ENCODE measurements at regions of chr22 and their contacts with region 1.

Region 1: GRCh38 chr22:20981787-20982562 is at the start of gene LZTR1:
- DNase-seq: peak; percentile 99 to 100 (median 100)
- ATAC-seq: peak; percentile 96
- H3K4me3 ChIP-seq: peak within 1 kb of the TSS; percentile 54
- H3K27ac ChIP-seq: peak within 1 kb of the TSS; percentile 86
- H3K4me1 ChIP-seq: peaks cover 19 to 48% of the 10 kb centered on the region in 2 experiments
- H3K27me3 ChIP-seq: peaks cover 3 to 9% of the 10 kb centered on the region in 2 experiments; a peak in 3 of 5 replicates
- CTCF ChIP-seq: peak; percentile 99 to 100 (median 99)
- EP300 ChIP-seq: no peak
- POLR2A ChIP-seq: no peak
- RAD21 ChIP-seq: peak; percentile 97
- polyA plus RNA-seq, gene LZTR1: 2.2 to 3.1 TPM

Region 2: DNA sequence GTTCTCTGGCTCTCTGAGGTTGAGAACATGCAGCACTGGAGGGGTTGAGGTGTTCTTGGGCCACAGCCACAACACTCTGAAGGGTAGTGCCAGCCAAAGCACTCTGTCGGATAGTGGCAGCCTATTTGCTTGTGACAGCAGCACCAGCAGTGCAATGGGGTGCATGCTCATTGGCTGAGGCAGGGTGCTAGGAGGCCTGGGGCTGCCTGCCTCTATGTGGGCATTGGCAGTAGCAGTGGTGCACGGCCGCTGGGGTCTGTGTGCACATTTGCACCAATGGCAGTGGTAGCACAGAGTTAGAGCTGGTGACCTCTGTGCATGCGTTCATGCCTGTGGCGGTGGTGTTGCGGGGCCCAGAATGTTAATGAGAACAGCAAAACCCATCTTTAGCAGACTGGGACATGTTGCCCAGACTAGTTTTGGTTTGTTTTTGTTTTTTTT is 148.7 kb before region 1 on chr22:
- CTCF ChIA-PET with region 1: no interaction called
- POLR2A ChIA-PET with region 1: no interaction called
- in situ Hi-C with region 1: no loop called
- intact Hi-C with region 1: no loop called
- DNase-seq: peak in 2 of 4 experiments; percentile 22 to 46
- ATAC-seq: no peak
- H3K4me3 ChIP-seq: no peak overlapping the region
- H3K27ac ChIP-seq: no peak overlapping the region
- H3K4me1 ChIP-seq: peaks cover 0 to 3% of the 10 kb centered on the region in 2 experiments; a peak in 1 of 5 replicates
- H3K27me3 ChIP-seq: no peaks in the 10 kb centered on the region
- CTCF ChIP-seq: no peak
- EP300 ChIP-seq: no peak
- POLR2A ChIP-seq: no peak
- RAD21 ChIP-seq: no peak

Region 3: DNA sequence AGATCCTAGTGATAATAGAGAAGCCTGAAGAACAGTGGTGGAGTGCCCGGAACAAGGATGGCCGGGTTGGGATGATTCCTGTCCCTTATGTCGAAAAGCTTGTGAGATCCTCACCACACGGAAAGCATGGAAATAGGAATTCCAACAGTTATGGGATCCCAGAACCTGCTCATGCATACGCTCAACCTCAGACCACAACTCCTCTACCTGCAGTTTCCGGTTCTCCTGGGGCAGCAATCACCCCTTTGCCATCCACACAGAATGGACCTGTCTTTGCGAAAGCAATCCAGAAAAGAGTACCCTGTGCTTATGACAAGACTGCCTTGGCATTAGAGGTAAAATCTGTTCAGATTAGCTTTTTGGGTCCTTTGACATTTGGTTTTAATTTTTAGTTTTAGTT is 48.1 kb before region 1 on chr22:
- CTCF ChIA-PET with region 1: no interaction called
- POLR2A ChIA-PET with region 1: interaction called, 1,556 read pairs
- in situ Hi-C with region 1: no loop called
- intact Hi-C with region 1: loop called (anchors 5 kb)
- DNase-seq: no peak
- ATAC-seq: no peak
- H3K4me3 ChIP-seq: no peak overlapping the region
- H3K27ac ChIP-seq: no peak overlapping the region
- H3K4me1 ChIP-seq: peaks cover 17 to 25% of the 10 kb centered on the region in 2 experiments
- H3K27me3 ChIP-seq: no peaks in the 10 kb centered on the region
- CTCF ChIP-seq: no peak
- EP300 ChIP-seq: no peak
- POLR2A ChIP-seq: no peak
- RAD21 ChIP-seq: no peak

Region 4: GRCh38 chr22:20957316-20958101 is 24.5 kb before region 1 on chr22:
- CTCF ChIA-PET with region 1: no interaction called
- POLR2A ChIA-PET with region 1: interaction called, 177 read pairs
- in situ Hi-C with region 1: no loop called
- intact Hi-C with region 1: no loop called
- DNase-seq: no peak
- ATAC-seq: 0 out of 3 replicates have a peak, but pooled peaks have one; percentile 3
- H3K4me3 ChIP-seq: no peak overlapping the region
- H3K27ac ChIP-seq: no peak overlapping the region
- H3K4me1 ChIP-seq: peaks cover 0 to 25% of the 10 kb centered on the region in 2 experiments; a peak in 2 of 5 replicates
- H3K27me3 ChIP-seq: peaks cover 0 to 2% of the 10 kb centered on the region in 2 experiments; a peak in 1 of 5 replicates
- CTCF ChIP-seq: no peak
- EP300 ChIP-seq: no peak
- POLR2A ChIP-seq: no peak
- RAD21 ChIP-seq: no peak